MCF 10A (cell line): ENCODE measurements at regions of chr3 and their contacts with region 1.

Region 1: DNA sequence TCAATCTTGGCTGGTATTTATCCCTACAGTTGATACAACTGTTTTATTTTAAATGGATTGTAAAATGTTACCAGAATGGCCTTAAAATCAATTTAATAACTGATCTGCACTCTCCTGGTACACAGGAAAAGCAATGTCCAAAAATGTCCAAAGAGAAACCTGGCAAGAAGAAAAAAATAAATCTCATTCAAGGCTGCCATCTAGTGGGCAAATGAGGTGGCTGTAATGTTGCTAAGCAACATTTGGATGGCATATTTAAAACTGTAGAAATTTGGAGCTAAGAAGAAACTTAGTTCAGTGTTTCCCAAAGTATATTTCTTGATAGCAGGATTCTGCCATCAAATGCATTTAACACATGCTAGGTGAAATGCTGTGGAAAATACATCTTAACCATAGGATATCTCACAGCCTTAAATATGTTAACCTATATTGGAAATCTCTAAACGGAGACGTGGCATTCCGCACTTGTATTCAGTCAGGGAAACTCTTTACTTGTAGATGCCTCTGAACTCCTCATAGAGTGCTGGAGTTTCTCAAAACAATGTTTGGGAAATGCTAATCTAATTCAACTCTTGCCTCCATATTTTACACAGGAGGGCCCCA is 216.8 kb downstream of the ERC2 start:
- DNase-seq: peak; percentile 75
- H3K4me3 Mint-ChIP-seq: no peak overlapping the region
- H3K27ac Mint-ChIP-seq: no peak overlapping the region
- H3K4me1 Mint-ChIP-seq: no peaks in the 10 kb centered on the region
- H3K27me3 Mint-ChIP-seq: no peaks in the 10 kb centered on the region
- CTCF ChIP-seq: peak; percentile 62

Region 2: GRCh38 chr3:54853573-54854404 is 1397.7 kb before region 1 on chr3:
- CTCF ChIA-PET with region 1: interaction called, 5 read pairs
- POLR2A ChIA-PET with region 1: interaction called, 3 read pairs
- intact Hi-C with region 1: loop called (anchors 1 kb)
- DNase-seq: peak; percentile 61
- H3K4me3 Mint-ChIP-seq: no peak overlapping the region
- H3K27ac Mint-ChIP-seq: peak overlapping the region; percentile 75
- H3K4me1 Mint-ChIP-seq: peaks cover 23% of the 10 kb centered on the region
- H3K27me3 Mint-ChIP-seq: peaks cover 16% of the 10 kb centered on the region
- CTCF ChIP-seq: peak; percentile 79

Region 3: DNA sequence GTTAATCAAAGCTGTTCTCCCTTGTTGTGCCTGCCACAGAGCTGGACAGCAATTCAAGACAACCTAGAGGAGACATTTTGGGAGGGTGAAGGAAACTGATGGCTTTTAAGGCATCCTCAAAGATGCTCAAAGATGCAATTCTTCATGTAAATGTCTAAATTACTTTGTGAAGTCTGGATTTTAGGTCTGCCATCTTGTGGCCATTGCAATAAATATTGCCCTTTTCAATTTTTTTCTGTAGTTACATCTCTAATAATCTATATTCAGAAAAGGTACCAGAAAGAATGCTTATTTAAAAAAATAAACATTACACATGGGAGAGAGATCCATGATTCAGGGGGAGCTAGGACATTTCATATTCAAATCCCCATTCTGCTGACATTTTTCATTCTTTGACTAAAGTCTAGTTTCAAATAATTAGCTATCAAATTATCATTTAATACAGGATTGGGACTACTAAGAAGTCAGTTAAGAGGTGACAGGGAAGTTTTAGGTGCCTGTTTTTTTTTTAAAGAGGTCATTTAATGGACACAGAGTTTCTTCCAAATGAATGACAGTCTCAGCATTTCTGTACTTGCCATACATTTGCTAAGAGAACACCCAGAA is 504.5 kb before region 1 on chr3:
- CTCF ChIA-PET with region 1: interaction called, 4 read pairs
- POLR2A ChIA-PET with region 1: no interaction called
- intact Hi-C with region 1: loop called (anchors 5 kb)
- DNase-seq: peak; percentile 19
- H3K4me3 Mint-ChIP-seq: no peak overlapping the region
- H3K27ac Mint-ChIP-seq: no peak overlapping the region
- H3K4me1 Mint-ChIP-seq: peaks cover 7% of the 10 kb centered on the region
- H3K27me3 Mint-ChIP-seq: no peaks in the 10 kb centered on the region
- CTCF ChIP-seq: peak; percentile 30

Region 4: DNA sequence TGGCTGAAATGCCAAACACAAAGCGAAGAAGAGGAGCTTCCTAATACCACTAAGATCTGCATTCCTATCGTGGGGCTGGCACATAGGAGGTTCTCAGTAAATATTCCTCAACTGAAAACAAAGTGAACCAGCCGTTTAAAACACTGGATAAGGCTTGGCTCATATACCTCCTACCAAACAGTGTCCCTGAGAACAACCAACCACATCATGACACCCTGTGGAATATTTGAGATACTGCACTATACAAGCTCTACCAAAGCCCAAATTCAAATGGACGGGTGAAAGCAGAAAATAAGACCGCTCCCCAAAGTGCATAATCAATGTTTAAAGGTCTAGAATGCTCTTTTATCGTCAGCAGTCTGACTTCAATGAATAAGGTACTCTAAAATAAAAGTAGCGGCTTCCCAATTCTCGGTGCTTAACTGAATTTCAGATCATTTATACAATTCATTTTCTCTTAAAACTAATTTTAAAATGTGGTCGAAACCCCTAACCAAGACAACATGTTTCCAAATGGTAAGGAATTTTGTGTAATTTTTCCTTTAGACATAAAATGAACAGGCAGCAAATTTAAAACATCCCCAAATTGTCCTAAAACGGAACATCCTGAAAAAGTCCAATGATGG is 209.0 kb before region 1 on chr3:
- CTCF ChIA-PET with region 1: interaction called, 7 read pairs
- POLR2A ChIA-PET with region 1: interaction called, 4 read pairs
- intact Hi-C with region 1: loop called (anchors 2 kb)
- DNase-seq: peak; percentile 61
- H3K4me3 Mint-ChIP-seq: no peak overlapping the region
- H3K27ac Mint-ChIP-seq: no peak overlapping the region
- H3K4me1 Mint-ChIP-seq: no peaks in the 10 kb centered on the region
- H3K27me3 Mint-ChIP-seq: peaks cover 41% of the 10 kb centered on the region
- CTCF ChIP-seq: peak; percentile 44

Region 5: GRCh38 chr3:56269755-56270535 is 18.5 kb after region 1 on chr3:
- CTCF ChIA-PET with region 1: interaction called, 10 read pairs
- POLR2A ChIA-PET with region 1: no interaction called
- intact Hi-C with region 1: no loop called
- DNase-seq: no peak
- H3K4me3 Mint-ChIP-seq: no peak overlapping the region
- H3K27ac Mint-ChIP-seq: peak overlapping the region; percentile 35
- H3K4me1 Mint-ChIP-seq: no peaks in the 10 kb centered on the region
- H3K27me3 Mint-ChIP-seq: no peaks in the 10 kb centered on the region
- CTCF ChIP-seq: no peak

Region 6: GRCh38 chr3:56547486-56547885 is 296.0 kb after region 1 on chr3:
- CTCF ChIA-PET with region 1: no interaction called
- POLR2A ChIA-PET with region 1: no interaction called
- intact Hi-C with region 1: no loop called
- DNase-seq: peak; percentile 28
- H3K4me3 Mint-ChIP-seq: no peak overlapping the region
- H3K27ac Mint-ChIP-seq: no peak overlapping the region
- H3K4me1 Mint-ChIP-seq: no peaks in the 10 kb centered on the region
- H3K27me3 Mint-ChIP-seq: peaks cover 69% of the 10 kb centered on the region
- CTCF ChIP-seq: peak; percentile 8